Esophagus muscularis mucosa (tissue), 4 donors: ENCODE measurements at regions of chr12 and their contacts with region 1.

Region 1: DNA sequence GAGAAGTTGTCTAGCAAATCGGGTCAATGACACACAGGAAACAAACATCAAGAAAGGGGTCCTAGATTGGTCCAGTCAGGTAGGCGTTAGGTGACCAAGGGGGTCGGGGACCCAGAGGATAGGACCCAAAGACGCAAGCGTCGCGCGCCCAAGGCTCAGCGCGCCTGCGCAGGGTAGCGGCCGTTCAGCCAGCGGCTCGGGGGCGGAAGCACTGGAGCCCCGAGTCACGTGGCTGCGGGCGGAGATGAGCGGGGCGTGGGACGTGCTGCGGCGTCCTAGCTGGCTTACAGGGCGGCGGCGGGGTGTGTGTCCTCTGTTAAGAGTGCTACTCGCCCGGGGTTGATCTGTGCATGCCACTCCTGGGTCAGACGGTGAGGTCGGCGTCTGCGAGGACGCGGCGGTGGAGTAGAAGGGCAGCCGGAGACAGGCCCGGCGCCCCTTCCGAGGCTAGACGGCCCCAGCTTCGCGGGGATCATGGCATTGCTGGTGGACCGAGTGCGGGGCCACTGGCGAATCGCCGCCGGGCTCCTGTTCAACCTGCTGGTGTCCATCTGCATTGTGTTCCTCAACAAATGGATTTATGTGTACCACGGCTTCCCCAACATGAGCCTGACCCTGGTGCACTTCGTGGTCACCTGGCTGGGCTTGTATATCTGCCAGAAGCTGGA is at the start of gene SLC35E3:
- DNase-seq: peak; percentile 96
- H3K4me3 ChIP-seq: peak within 1 kb of the TSS; percentile 69 to 80 (median 74)
- H3K27ac ChIP-seq: peak within 1 kb of the TSS; percentile 78 to 81 (median 80)
- H3K4me1 ChIP-seq: peaks cover 9 to 38% (median 21%) of the 10 kb centered on the region in 4 donors
- H3K27me3 ChIP-seq: no peaks in the 10 kb centered on the region
- CTCF ChIP-seq: no peak
- EP300 ChIP-seq: no peak
- POLR2A ChIP-seq: no peak
- total RNA-seq, gene SLC35E3: 1.7 to 4.9 (median 3.1) TPM

Region 2: DNA sequence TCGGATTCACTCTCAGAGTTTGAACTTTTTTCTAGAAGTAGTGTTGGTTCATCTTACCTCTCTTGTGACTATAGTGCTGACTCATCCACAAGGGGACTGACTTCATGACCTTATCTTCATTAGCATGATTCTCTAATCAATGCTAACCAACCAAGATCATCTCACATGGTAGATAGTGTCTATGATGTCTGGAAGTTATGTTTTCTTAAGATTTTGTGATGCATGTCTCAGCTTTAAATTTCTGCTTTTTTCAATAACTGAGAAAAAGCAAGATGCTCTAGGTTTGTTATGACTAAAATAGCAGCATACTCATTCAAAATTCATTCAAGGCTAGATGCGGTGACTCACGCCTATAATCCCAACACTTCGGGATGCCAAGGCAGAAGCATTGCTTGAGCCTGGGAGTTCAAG is 12.4 kb before region 1 on chr12:
- intact Hi-C with region 1: no loop called
- DNase-seq: no peak
- H3K4me3 ChIP-seq: no peak overlapping the region
- H3K27ac ChIP-seq: no peak overlapping the region
- H3K4me1 ChIP-seq: no peaks in the 10 kb centered on the region
- H3K27me3 ChIP-seq: no peaks in the 10 kb centered on the region
- CTCF ChIP-seq: no peak
- EP300 ChIP-seq: no peak
- POLR2A ChIP-seq: no peak

Region 3: GRCh38 chr12:68807576-68808387 is 61.7 kb after region 1 on chr12 and contains the start of gene MDM2:
- intact Hi-C with region 1: loop called (anchors 5 kb)
- DNase-seq: peak; percentile 98
- H3K4me3 ChIP-seq: peak within 1 kb of the TSS; percentile 85 to 99 (median 91)
- H3K27ac ChIP-seq: peak within 1 kb of the TSS; percentile 96 to 100 (median 98)
- H3K4me1 ChIP-seq: peaks cover 19 to 38% (median 35%) of the 10 kb centered on the region in 4 donors
- H3K27me3 ChIP-seq: no peaks in the 10 kb centered on the region
- CTCF ChIP-seq: peak; percentile 71 to 95 (median 75)
- EP300 ChIP-seq: no peak
- POLR2A ChIP-seq: peak; percentile 79
- total RNA-seq, gene MDM2: 33.3 to 47.2 (median 40.0) TPM